Activated CD4-positive, alpha-beta T cell treated with anti-CD3 and anti-CD28 coated beads for 36 hours (primary cell): ENCODE measurements at regions of chr17 and their contacts with region 1.

Region 1: GRCh38 chr17:49788478-49789242 is at the start of gene KAT7:
- DNase-seq: peak; percentile 99
- ATAC-seq: peak; percentile 91
- H3K4me3 Mint-ChIP-seq: peak within 1 kb of the TSS; percentile 89
- H3K27ac Mint-ChIP-seq: peak within 1 kb of the TSS; percentile 98
- H3K4me1 Mint-ChIP-seq: peaks cover 53% of the 10 kb centered on the region
- H3K27me3 Mint-ChIP-seq: no peaks in the 10 kb centered on the region
- total RNA-seq, gene KAT7: 63.5 to 93.0 TPM

Region 2: GRCh38 chr17:48970224-48970623 is 818.4 kb before region 1 on chr17:
- CTCF ChIA-PET with region 1: no interaction called
- POLR2A ChIA-PET with region 1: no interaction called
- intact Hi-C with region 1: no loop called
- DNase-seq: no peak
- ATAC-seq: no peak
- H3K4me3 Mint-ChIP-seq: no peak overlapping the region
- H3K27ac Mint-ChIP-seq: no peak overlapping the region
- H3K4me1 Mint-ChIP-seq: no peaks in the 10 kb centered on the region
- H3K27me3 Mint-ChIP-seq: peaks cover 26% of the 10 kb centered on the region

Region 3: DNA sequence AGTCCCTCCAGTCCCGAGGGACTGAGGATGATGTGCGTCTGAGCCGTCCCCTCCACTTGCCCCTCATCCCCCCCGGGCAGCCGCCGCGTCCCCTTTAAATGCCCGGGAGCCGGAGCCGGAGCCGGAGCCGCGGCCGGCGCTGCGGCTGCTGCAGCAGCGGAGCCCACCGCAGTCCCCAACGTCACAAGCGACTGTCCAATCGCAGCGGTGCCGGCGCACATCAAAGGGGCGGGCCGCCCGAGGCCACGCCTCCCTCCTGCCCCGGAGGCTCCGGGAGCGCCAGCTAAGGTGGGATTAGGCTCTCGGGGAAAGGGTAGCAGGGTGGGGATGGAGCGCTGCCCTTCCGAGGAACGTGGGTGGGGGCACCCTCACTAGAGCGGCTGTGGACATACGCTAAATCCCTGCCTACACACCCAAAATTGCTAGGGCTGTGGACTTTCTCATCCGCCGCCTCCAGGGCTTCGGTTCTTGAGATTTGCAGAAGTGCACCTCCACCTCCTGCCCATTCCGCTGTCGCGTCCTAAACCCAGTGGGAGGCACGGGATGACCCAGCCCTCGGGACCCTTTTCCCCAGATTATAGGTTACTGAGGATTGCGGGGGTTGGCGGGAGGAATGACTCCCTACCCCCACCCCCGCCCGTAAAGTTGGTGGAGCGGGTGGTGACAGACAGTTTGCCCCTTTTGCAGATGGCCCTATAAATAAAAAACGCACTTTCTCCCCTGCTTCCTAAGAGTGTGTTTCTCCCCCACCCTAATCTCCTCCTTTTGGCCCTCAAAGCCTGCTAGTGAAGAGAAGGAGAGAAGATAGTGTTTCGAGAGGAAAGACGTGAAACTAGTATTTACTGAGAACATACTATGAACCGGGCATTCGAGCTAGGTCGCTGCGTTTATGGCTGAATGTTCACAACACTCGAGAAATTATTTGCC is 557.8 kb before region 1 on chr17 and contains the start of gene PHOSPHO1:
- CTCF ChIA-PET with region 1: no interaction called
- POLR2A ChIA-PET with region 1: no interaction called
- intact Hi-C with region 1: no loop called
- DNase-seq: peak; percentile 91
- ATAC-seq: peak; percentile 89
- H3K4me3 Mint-ChIP-seq: peak within 1 kb of the TSS; percentile 66
- H3K27ac Mint-ChIP-seq: no peak within 1 kb of the TSS
- H3K4me1 Mint-ChIP-seq: peaks cover 6% of the 10 kb centered on the region
- H3K27me3 Mint-ChIP-seq: peaks cover 19% of the 10 kb centered on the region
- total RNA-seq, gene PHOSPHO1: not detected

Region 4: DNA sequence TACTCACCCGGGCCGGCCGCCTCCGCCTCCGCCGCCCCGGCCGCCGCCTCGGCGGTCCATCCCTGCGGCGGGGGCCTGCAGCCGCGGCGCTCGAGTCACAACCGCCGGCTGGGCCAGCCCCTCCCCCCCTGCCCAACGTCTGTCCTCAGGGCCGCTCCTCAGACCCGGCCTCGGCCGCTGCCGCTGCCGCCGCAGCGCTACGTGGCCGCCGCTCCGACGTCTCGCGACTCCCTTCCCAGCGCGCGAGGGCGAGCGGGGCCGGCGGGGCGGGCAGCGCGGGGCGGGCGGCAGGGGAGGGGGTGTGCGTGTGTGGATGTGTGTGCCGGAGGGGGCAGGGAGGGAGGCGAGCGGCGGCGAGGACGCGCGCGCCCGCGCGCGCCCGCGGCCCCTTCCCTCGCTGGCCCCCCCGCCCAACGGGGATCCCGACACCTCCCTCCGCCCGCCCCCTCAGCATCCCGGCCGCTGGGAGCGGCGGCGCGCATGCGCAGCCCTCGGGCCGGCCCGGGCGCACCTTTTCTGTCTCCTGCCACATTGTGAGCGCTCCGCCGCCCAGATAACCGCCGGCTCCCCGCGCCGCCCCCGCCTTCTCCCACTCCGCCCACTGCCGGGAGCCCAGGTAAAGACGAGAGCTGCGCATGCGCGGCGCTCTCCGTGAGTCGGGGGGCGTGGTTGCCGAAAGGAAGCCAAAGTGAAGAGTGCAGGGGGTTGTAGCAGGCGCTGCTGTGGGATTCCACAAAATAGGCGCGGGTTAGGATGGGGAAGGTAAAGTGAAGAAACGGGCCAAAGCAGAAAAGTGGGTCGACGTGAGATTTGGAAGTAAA is 426.5 kb before region 1 on chr17 and contains the start of gene ZNF652:
- CTCF ChIA-PET with region 1: no interaction called
- POLR2A ChIA-PET with region 1: no interaction called
- intact Hi-C with region 1: loop called in 1 of 2 experiments (anchors 1 kb)
- DNase-seq: peak; percentile 93
- ATAC-seq: peak; percentile 57
- H3K4me3 Mint-ChIP-seq: peak within 1 kb of the TSS; percentile 92
- H3K27ac Mint-ChIP-seq: peak within 1 kb of the TSS; percentile 92
- H3K4me1 Mint-ChIP-seq: peaks cover 50% of the 10 kb centered on the region
- H3K27me3 Mint-ChIP-seq: peaks cover 1% of the 10 kb centered on the region
- total RNA-seq, gene ZNF652: 5.2 to 7.0 TPM

Region 5: DNA sequence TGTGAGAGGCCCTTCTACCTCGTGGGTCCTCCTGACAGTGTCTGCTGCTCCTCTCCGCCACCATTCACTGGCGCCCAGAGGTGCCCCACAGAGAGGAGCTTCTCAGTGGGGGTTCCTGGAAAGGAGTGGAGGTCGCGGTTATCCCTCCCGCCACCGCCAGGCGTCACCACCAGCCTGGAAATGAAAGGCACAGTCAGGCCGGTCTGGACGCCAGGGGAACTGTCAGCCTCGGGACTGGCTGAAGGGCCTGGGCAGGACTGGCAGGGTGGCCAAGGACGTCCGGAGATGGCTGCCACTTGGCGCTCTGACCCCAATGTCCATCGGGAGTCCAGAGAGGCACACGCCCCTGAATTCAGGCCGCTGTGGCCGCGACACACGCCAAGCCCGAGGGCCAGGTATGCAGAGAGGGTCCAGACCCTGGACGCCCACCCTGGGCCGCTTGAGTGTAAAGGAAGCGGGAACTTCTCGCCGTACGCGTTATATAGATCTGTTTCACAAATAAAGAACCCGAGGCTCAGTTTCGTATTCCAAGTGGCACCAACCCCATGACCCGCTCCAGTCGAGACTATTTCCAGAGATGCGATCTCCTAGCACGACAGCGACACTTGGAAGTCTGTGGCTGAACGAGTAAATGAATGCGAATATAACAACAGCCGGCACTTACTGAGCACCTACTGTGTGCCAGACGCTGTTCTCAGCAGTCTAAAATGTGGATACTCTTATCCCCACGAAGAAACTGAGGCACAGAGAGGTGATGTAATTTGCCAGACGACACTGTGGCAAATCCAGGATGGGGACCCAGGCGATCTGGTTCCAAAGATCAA is 220.6 kb before region 1 on chr17:
- CTCF ChIA-PET with region 1: interaction called, 7 read pairs
- POLR2A ChIA-PET with region 1: no interaction called
- intact Hi-C with region 1: loop called (anchors 1 to 2 kb)
- DNase-seq: peak; percentile 91
- ATAC-seq: peak; percentile 49
- H3K4me3 Mint-ChIP-seq: peak overlapping the region; percentile 56
- H3K27ac Mint-ChIP-seq: no peak overlapping the region
- H3K4me1 Mint-ChIP-seq: peaks cover 14% of the 10 kb centered on the region
- H3K27me3 Mint-ChIP-seq: peaks cover 19% of the 10 kb centered on the region

Region 6: GRCh38 chr17:49715717-49716279 is 72.9 kb before region 1 on chr17:
- CTCF ChIA-PET with region 1: interaction called, 5 read pairs
- POLR2A ChIA-PET with region 1: interaction called, 5 read pairs
- intact Hi-C with region 1: loop called in 1 of 2 experiments (anchors 2 kb)
- DNase-seq: peak; percentile 68
- ATAC-seq: peak; percentile 39
- H3K4me3 Mint-ChIP-seq: peak overlapping the region; percentile 7
- H3K27ac Mint-ChIP-seq: peak overlapping the region; percentile 90
- H3K4me1 Mint-ChIP-seq: peaks cover 41% of the 10 kb centered on the region
- H3K27me3 Mint-ChIP-seq: no peaks in the 10 kb centered on the region

Region 7: DNA sequence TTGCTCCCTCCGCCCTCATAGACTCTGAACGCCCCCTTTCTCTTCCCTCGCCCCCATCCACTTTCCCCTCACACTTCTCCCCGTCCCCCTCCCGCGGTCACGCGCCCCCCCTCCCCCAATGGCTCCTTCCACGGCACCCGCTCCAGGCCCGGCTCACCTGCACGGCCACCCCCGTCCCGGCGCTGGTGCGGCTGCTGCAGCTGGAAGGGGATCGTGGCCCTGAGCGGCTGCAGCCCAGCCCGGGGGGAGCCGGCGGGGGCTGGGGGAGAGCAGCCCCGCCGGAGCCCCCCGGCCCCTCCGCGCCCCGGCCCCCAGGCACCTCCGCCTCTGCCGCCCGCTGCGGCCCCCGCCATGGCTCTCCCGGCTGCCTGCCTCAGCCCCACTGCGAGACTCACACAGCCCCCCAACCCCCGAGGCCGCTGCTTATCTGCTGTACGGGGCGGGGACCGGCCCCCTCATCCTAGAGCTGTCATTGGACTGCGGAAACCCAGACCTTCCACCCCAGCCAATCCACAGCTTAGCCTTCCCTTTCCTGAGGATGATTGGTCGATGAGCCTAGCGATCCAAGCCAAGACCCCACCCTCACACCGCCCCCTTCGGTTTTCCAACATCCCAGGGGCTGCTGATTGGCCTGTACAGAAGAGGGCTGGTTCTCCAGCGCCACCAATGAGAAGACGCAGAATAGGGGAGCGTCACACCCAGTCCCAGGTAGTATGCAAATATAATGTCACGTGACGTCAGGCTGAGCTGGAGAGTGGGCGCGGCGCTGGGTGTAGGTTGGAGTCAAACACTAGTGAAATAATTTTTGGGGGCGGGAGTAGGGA is 24.7 kb before region 1 on chr17 and contains the start of gene FAM117A:
- CTCF ChIA-PET with region 1: interaction called, 6 read pairs
- POLR2A ChIA-PET with region 1: interaction called, 28 read pairs
- intact Hi-C with region 1: loop called (anchors 1 kb)
- DNase-seq: peak; percentile 98
- ATAC-seq: peak; percentile 97
- H3K4me3 Mint-ChIP-seq: peak within 1 kb of the TSS; percentile 89
- H3K27ac Mint-ChIP-seq: peak within 1 kb of the TSS; percentile 88
- H3K4me1 Mint-ChIP-seq: peaks cover 52% of the 10 kb centered on the region
- H3K27me3 Mint-ChIP-seq: no peaks in the 10 kb centered on the region
- total RNA-seq, gene FAM117A: 14.1 to 15.4 TPM

Region 8: GRCh38 chr17:50719144-50719923 is 930.7 kb after region 1 on chr17 and contains the start of gene LUC7L3:
- CTCF ChIA-PET with region 1: no interaction called
- POLR2A ChIA-PET with region 1: no interaction called
- intact Hi-C with region 1: loop called in 1 of 2 experiments (anchors 2 kb)
- DNase-seq: peak; percentile 97
- ATAC-seq: peak; percentile 89
- H3K4me3 Mint-ChIP-seq: peak within 1 kb of the TSS; percentile 87
- H3K27ac Mint-ChIP-seq: peak within 1 kb of the TSS; percentile 99
- H3K4me1 Mint-ChIP-seq: peaks cover 22% of the 10 kb centered on the region
- H3K27me3 Mint-ChIP-seq: no peaks in the 10 kb centered on the region
- total RNA-seq, gene LUC7L3: 112 to 120 TPM